ENCODE measurements at regions of chr10 and their contacts with region 1.

Region 1: DNA sequence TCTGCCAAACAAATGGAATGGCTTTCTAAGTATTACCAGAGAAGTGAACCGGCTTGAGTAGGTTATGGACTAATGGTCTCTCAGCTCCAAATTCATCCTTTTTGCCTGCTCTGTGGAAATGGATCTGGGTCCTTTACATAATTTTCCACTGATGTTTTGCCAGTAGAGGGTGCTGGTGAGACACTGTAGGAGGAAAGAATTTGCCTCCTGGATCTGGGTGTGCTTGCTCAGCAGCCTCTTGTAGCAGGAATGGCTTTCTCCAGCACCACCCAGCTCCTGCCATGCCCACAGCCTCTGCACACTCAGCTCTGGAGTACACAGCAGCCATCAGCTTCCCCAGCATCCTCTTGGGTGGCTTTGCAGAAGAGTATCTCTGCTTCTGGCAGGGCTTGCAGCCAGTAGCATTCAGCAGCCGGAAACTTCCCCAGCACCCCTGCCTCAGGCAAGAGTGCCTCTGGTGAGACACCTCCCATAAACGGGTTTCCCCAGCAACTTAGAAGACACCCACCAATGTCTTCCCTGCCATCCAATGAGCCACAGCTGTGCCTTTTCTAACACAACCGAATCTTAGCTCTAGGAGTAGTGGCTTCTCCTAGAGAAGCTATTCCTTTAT is 235.0 kb upstream of the PLPP4 start:
- DNase-seq: peak; percentile 32
- ATAC-seq: peak; percentile 89
- H3K4me3 ChIP-seq: no peak overlapping the region
- H3K27ac ChIP-seq: no peak overlapping the region
- H3K4me1 ChIP-seq: no peaks in the 10 kb centered on the region
- H3K27me3 ChIP-seq: no peaks in the 10 kb centered on the region
- CTCF ChIP-seq: peak; percentile 88

Region 2: GRCh38 chr10:120336911-120337540 is 115.0 kb after region 1 on chr10:
- CTCF ChIA-PET with region 1: no interaction called
- POLR2A ChIA-PET with region 1: no interaction called
- in situ Hi-C with region 1: no loop called
- intact Hi-C with region 1: loop called (anchors 5 kb)
- DNase-seq: peak; percentile 41
- ATAC-seq: peak; percentile 74; the same call in 1 of the 2 replicates
- H3K4me3 ChIP-seq: no peak overlapping the region
- H3K27ac ChIP-seq: no peak overlapping the region
- H3K4me1 ChIP-seq: no peaks in the 10 kb centered on the region
- H3K27me3 ChIP-seq: no peaks in the 10 kb centered on the region; the same call in 1 of the 2 replicates
- CTCF ChIP-seq: peak; percentile 90